ENCODE measurements at regions of chr22 and their contacts with region 1.

Region 1: DNA sequence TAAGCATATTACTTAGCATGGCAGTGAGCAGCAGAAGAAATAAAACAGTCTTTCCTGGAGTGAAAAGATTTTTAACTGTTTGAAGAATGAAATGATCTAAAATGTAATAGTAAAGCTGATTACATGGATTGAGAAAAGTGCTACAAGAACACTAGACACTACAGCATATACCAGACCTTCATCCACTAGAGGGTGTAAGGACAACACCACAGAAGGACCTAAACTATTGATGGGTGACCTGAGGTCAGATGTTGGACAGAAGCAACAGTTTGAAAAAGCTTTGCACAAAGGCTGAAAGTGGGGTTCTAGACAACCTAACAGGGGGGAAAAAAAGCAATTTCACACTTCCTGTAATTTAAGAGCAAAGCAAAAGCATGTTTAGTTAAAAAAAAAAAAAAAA is 97.7 kb downstream of the RBFOX2 start:
- DNase-seq: no peak
- H3K4me3 ChIP-seq: no peak overlapping the region
- CTCF ChIP-seq: peak; percentile 55

Region 2: GRCh38 chr22:35477911-35478582 is 452.9 kb before region 1 on chr22:
- CTCF ChIA-PET with region 1: no interaction called
- POLR2A ChIA-PET with region 1: no interaction called
- DNase-seq: peak; percentile 24
- H3K4me3 ChIP-seq: no peak overlapping the region
- CTCF ChIP-seq: no peak

Region 3: DNA sequence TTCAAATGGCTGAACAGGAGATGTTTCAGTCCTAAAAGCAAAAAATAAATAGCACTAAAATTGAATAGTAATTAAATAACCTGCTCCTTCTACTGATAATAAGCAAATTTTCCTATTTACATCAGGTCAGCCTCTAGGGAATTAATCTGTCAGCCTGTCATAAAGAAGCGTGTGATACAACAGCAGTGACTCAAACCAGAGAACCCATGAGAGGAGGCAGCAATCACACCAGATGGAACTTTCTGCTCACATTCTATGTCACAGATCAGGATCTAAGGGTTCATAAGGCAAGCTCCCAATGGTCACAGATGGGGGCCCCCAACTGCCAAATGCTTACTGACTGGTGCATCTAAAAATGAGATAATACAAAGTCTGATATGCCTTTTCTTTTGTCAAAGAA is 56.6 kb after region 1 on chr22:
- CTCF ChIA-PET with region 1: interaction called, 11 read pairs
- POLR2A ChIA-PET with region 1: no interaction called
- DNase-seq: no peak
- H3K4me3 ChIP-seq: no peak overlapping the region
- CTCF ChIP-seq: no peak

Region 4: DNA sequence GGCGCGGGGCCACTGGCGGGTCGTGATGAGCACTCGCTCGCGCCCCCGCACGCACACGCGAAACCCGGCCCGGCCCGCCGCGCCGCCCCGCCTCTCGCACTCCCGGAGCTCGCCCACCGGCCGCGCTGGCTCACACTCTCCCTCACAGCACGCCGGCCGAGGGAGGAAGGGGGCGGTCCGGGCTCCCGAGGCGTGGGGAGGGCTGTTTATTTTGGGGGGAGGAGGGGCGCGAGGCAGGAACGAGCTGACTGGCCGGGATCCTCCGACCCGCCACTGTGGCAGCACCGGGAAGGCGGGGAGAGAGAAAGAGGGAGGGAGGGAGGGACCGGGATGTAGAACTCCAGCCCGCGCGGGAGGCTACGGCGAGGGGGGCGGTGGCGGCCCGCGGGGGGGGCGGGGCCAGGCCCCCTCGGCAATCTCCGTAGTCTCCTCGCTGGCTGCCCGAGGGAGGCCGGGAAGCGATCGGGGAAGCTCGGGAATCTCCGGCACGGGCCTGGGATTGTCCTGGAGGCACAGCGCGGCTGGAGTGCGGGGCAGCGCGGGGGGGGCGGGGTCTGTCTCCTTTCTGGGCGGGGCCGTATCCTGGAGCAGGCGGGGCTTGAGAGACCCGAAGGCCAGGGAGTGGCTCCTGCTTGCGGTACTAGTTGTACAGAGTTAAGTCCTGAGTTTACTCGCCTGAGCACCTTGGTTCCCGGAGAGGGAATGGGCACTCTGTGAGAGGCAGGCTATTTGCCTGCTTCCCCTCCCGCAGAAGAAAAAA is 97.9 kb after region 1 on chr22 and contains the start of gene RBFOX2:
- CTCF ChIA-PET with region 1: interaction called, 13 read pairs
- POLR2A ChIA-PET with region 1: interaction called, 3 read pairs
- DNase-seq: peak; percentile 74
- H3K4me3 ChIP-seq: peak within 1 kb of the TSS; percentile 89
- CTCF ChIP-seq: no peak

Region 5: DNA sequence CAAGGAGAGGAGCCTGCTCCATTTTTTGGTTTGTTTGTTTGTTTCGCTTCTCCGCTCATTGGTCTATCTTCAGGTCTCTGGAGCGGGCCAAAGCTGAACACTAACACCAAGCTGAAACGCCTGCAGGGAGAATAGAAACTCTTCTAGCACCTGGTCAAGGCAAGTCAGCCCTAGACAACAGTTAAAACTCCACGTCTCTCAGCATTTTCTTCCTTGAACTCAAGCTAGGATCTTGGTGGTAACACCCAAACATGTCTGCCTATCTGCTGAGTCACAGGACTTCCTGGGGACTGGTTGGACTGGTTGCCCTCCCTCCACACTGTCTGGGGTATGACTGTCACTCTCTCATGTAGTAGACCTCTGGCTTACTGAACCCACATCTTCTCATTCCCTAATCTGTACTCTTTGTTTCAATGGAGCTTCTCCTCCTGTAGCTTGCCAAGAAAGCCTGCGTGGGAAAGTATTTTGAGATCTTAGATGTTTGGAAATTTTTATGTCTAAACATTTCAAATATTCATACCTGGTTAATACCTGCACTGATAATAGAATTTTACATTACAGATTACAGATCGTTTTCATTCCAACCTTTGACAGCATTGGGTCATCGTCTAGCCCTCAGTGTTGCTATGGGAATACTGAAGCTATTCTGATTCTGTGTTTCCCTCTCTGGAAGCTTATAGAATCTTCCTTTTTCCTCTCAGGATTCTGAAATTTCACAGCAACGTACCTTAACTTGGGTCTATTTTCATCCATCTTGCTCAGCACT is 121.8 kb after region 1 on chr22:
- CTCF ChIA-PET with region 1: interaction called, 22 read pairs
- POLR2A ChIA-PET with region 1: no interaction called
- DNase-seq: no peak
- H3K4me3 ChIP-seq: no peak overlapping the region
- CTCF ChIP-seq: no peak

Region 6: DNA sequence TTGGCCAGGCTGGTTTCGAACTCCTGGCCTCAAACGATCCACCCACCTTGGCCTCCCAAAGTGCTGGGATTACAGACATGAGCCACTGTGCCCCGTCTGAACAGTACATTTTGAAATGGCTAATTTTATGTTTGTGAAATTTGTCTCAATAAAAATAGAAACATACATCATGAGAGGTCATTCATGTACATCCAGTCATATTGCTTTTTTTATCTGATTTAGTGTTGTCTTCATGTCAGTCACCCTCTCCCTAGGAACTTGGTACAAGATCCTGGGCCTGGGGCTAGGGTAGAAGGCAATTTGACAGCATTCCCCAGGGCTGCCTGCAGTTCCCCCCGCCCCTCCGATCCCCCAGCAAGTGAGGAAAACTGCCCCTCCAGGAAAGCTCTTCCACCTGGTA is 144.3 kb after region 1 on chr22:
- CTCF ChIA-PET with region 1: interaction called, 219 read pairs
- POLR2A ChIA-PET with region 1: no interaction called
- DNase-seq: no peak
- H3K4me3 ChIP-seq: no peak overlapping the region
- CTCF ChIP-seq: no peak